Aorta (tissue), 5 donors: ENCODE measurements at regions of chr10 and their contacts with region 1.

Region 1: GRCh38 chr10:97801422-97801821 is 29.6 kb upstream of the SFRP5 start:
- DNase-seq: no peak
- ATAC-seq: no peak
- H3K4me3 ChIP-seq: no peak overlapping the region
- H3K27ac ChIP-seq: no peak overlapping the region
- H3K4me1 ChIP-seq: no peaks in the 10 kb centered on the region
- H3K27me3 ChIP-seq: peaks cover 0 to 2% of the 10 kb centered on the region in 2 donors

Region 2: GRCh38 chr10:97849687-97850402 is 48.4 kb after region 1 on chr10 and contains the start of gene GOLGA7B:
- intact Hi-C with region 1: loop called in 1 of 2 experiments (anchors 5 kb)
- DNase-seq: peak in 1 of 2 donors; percentile 81
- ATAC-seq: peak; percentile 39
- H3K4me3 ChIP-seq: peak within 1 kb of the TSS; percentile 63 to 73
- H3K27ac ChIP-seq: no peak within 1 kb of the TSS
- H3K4me1 ChIP-seq: no peaks in the 10 kb centered on the region
- H3K27me3 ChIP-seq: no peaks in the 10 kb centered on the region
- total RNA-seq, gene GOLGA7B: 0.36 to 0.45 TPM